ENCODE measurements at regions of chr2 and their contacts with region 1.

Region 1: GRCh38 chr2:24342110-24342910 is 18.0 kb downstream of the ITSN2 start:
- DNase-seq: peak; percentile 37
- CTCF ChIP-seq: peak; percentile 26

Region 2: GRCh38 chr2:24307961-24308360 is 34.3 kb before region 1 on chr2:
- CTCF ChIA-PET with region 1: no interaction called
- POLR2A ChIA-PET with region 1: no interaction called
- DNase-seq: no peak
- CTCF ChIP-seq: no peak

Region 3: DNA sequence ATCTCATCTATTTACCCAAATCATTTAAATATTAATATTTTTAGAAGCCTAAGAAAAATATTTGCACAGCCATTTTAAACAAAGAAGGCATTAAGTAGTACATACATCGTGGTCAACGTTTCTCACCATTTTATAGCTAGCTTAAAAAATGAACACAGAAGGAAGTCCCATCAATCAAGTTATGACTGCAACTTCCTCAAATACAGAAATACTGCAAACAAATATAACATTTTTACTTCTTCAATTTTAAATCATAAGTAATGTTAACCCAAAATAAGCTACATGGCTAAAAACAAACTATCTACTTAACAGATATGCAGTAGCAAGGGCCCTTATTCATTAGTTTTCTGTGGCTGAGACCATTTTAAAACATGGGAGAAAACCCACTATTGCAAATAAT is 12.6 kb before region 1 on chr2:
- CTCF ChIA-PET with region 1: interaction called, 4 read pairs
- POLR2A ChIA-PET with region 1: interaction called, 10 read pairs
- DNase-seq: peak; percentile 54
- CTCF ChIP-seq: no peak

Region 4: GRCh38 chr2:24360050-24360962 is 18.0 kb after region 1 on chr2 and contains the start of gene ITSN2:
- CTCF ChIA-PET with region 1: interaction called, 3 read pairs
- POLR2A ChIA-PET with region 1: interaction called, 13 read pairs
- DNase-seq: peak; percentile 86
- CTCF ChIP-seq: no peak

Region 5: DNA sequence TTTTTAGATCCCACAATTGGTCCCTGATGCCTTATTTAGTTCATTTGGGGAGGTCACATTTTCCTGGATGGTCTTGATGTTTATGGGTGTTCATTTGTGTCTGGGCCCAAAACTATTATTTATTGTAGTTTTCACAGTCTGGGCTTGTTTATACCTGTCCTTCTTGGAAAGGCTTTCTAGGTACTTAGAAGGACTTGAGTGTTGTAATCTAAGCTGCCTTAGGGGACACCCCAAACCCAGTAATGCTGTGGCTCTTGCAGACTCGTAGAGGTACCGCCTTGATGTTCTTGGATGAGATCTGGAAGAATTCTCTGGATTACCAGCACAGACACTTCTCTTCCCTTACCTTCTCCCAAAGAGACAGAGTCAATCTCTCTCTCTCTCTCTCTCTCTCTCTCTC is 43.1 kb after region 1 on chr2:
- CTCF ChIA-PET with region 1: no interaction called
- POLR2A ChIA-PET with region 1: no interaction called
- DNase-seq: no peak
- CTCF ChIP-seq: no peak